ENCODE measurements at regions of chr2 and their contacts with region 1.

Region 1: GRCh38 chr2:209423562-209424198 is at the start of gene MAP2:
- DNase-seq: peak; percentile 83 to 89
- ATAC-seq: peak; percentile 83 to 97 (median 96)
- H3K4me3 ChIP-seq: peak within 1 kb of the TSS; percentile 64
- H3K27ac ChIP-seq: no peak within 1 kb of the TSS
- H3K4me1 ChIP-seq: peaks cover 4% of the 10 kb centered on the region
- H3K27me3 ChIP-seq: peaks cover 0 to 19% (median 0%) of the 10 kb centered on the region in 3 donors
- CTCF ChIP-seq: peak; percentile 90
- total RNA-seq, gene MAP2: 0.81 to 6.5 (median 2.7) TPM

Region 2: GRCh38 chr2:209505410-209505809 is 81.7 kb after region 1 on chr2:
- intact Hi-C with region 1: no loop called
- DNase-seq: no peak
- ATAC-seq: no peak
- H3K4me3 ChIP-seq: no peak overlapping the region
- H3K27ac ChIP-seq: no peak overlapping the region
- H3K4me1 ChIP-seq: no peaks in the 10 kb centered on the region
- H3K27me3 ChIP-seq: no peaks in the 10 kb centered on the region
- CTCF ChIP-seq: no peak

Region 3: DNA sequence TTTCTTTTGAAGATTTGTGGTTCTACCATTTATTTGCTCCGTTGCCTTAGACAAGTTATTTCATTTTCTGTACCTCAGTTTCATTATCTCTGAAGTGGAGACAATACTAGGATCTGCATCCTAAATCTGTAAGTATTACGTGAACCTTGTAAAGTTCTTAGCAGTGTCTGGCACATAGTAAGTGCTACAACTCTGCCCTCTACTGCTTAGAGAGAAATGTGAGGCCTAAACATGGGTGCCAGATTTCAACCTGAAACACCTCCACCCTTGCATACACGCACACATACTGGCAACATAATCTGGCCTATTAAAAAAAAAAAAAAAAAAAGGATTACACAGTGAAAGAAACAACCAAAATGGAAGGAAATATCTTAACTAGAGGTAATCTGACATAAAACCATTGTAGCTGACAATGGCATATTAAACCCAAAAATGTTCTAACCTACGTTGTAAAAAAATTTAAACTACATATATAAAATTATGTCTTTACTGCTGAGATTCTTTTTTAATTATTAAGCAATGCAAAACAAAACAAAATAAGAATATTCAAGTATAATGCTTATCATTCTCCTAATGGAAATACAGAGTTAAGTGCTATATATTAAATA is 132.8 kb after region 1 on chr2:
- intact Hi-C with region 1: loop called in 1 of 2 experiments (anchors 5 kb)
- DNase-seq: no peak
- ATAC-seq: no peak
- H3K4me3 ChIP-seq: no peak overlapping the region
- H3K27ac ChIP-seq: no peak overlapping the region
- H3K4me1 ChIP-seq: no peaks in the 10 kb centered on the region
- H3K27me3 ChIP-seq: no peaks in the 10 kb centered on the region
- CTCF ChIP-seq: peak; percentile 31

Measured in psoas muscle (tissue), 8 donors.